Activated CD4-positive, alpha-beta T cell treated with anti-CD3 and anti-CD28 coated beads for 36 hours (primary cell): ENCODE measurements at regions of chr5 and their contacts with region 1.

Region 1: GRCh38 chr5:150700594-150701293 is at the start of gene RBM22:
- DNase-seq: peak; percentile 95
- ATAC-seq: peak; percentile 95
- H3K4me3 Mint-ChIP-seq: no peak within 1 kb of the TSS
- H3K27ac Mint-ChIP-seq: no peak within 1 kb of the TSS
- H3K4me1 Mint-ChIP-seq: peaks cover 15% of the 10 kb centered on the region
- H3K27me3 Mint-ChIP-seq: no peaks in the 10 kb centered on the region
- total RNA-seq, gene RBM22: 59.9 to 61.8 TPM

Region 2: GRCh38 chr5:150357326-150358260 is 343.2 kb before region 1 on chr5 and contains the start of gene TCOF1:
- CTCF ChIA-PET with region 1: no interaction called
- POLR2A ChIA-PET with region 1: no interaction called
- intact Hi-C with region 1: loop called in 1 of 2 experiments (anchors 1 kb)
- DNase-seq: peak; percentile 99
- ATAC-seq: peak; percentile 99
- H3K4me3 Mint-ChIP-seq: peak within 1 kb of the TSS; percentile 87
- H3K27ac Mint-ChIP-seq: peak within 1 kb of the TSS; percentile 90
- H3K4me1 Mint-ChIP-seq: peaks cover 43% of the 10 kb centered on the region
- H3K27me3 Mint-ChIP-seq: no peaks in the 10 kb centered on the region
- total RNA-seq, gene TCOF1: 113 to 145 TPM

Region 3: DNA sequence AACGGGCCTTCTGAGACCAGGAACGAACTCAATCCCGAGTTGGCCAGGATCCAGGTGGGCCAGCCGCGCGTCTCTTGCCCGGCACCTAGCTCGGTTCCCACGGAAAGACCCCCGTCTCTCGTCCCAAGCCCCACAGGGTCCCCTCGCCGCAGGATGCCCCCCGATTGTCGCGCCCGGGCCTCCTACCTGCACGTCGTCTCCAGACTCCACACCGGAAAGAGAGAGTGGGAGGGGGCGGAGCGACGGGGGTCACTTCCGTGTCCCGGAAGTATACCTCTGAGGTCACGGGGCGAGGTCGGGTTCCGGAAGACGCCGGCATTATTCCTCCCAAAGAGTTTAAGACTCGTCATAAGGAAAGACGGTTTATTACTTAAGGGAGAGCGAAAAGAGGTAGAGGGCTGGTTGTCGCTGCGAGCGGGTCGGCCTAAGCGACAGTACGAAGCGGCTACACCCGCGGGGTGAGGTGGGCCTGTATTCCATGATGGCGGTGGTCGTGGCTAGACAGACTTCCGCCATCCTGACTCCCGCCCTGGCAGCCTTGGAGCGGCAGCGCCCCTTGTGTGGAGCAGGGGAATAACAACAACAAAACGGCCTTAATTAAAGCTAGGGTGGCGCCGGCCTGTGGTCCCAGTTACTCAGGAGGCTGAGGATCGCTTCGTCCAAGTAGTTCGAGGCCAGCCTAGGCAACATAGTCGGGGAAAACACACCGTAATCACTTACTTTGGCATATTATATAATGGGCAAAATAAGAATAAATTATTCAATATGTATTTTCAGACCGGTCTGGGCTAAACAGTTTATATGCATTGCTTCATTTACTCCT is 251.0 kb before region 1 on chr5 and contains the start of gene RPS14:
- CTCF ChIA-PET with region 1: no interaction called
- POLR2A ChIA-PET with region 1: interaction called, 5 read pairs
- intact Hi-C with region 1: loop called (anchors 1 kb)
- DNase-seq: peak; percentile 96
- ATAC-seq: peak; percentile 93
- H3K4me3 Mint-ChIP-seq: peak within 1 kb of the TSS; percentile 95
- H3K27ac Mint-ChIP-seq: peak within 1 kb of the TSS; percentile 99
- H3K4me1 Mint-ChIP-seq: peaks cover 31% of the 10 kb centered on the region
- H3K27me3 Mint-ChIP-seq: no peaks in the 10 kb centered on the region
- total RNA-seq, gene RPS14: 2,270 to 3,312 TPM

Region 4: DNA sequence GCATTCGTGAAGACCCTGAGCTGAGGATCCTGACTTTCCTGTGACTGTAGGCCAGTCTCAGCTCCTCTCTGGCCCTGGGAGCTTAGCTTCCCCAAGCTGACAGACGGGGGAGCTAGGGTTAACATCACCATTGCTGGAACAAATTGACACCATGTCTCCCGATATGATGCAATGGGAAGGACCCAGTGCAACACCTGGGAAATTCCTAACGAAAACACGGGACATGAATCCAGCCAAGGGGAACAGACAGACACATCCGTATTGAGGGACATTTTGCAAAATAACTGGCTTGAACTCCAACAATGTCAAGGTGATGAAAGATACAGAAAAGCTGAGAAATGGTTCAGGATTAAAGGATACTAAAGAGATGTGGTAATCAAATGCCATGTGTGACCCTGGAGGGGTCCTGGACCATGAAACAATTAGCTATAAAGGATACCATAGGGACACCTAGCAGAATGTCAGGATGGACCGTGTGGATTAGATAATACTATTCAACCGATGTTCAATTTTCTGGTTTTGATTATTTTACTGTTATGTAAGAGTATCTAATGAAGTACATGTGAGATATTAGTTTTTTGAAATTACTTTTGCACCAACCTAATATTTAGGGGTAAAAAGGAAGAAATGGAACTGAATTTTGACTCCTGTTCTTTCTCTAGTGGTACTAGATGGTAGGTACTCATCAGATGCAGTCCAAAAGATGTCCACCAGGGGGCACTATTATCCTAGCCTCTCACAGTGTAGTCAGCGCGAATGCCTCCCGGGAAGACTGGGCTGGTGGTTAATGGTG is 140.1 kb before region 1 on chr5:
- CTCF ChIA-PET with region 1: interaction called, 4 read pairs
- POLR2A ChIA-PET with region 1: no interaction called
- intact Hi-C with region 1: loop called in 1 of 2 experiments (anchors 5 kb)
- DNase-seq: peak; percentile 92
- ATAC-seq: peak; percentile 97
- H3K4me3 Mint-ChIP-seq: no peak overlapping the region
- H3K27ac Mint-ChIP-seq: no peak overlapping the region
- H3K4me1 Mint-ChIP-seq: no peaks in the 10 kb centered on the region
- H3K27me3 Mint-ChIP-seq: no peaks in the 10 kb centered on the region

Region 5: GRCh38 chr5:150778517-150779396 is 78.0 kb after region 1 on chr5 and contains the start of gene SMIM3:
- CTCF ChIA-PET with region 1: interaction called, 26 read pairs
- POLR2A ChIA-PET with region 1: interaction called, 11 read pairs
- intact Hi-C with region 1: loop called (anchors 1 to 2 kb)
- DNase-seq: peak; percentile 87
- ATAC-seq: peak; percentile 60
- H3K4me3 Mint-ChIP-seq: peak within 1 kb of the TSS; percentile 99
- H3K27ac Mint-ChIP-seq: peak within 1 kb of the TSS; percentile 96
- H3K4me1 Mint-ChIP-seq: peaks cover 49% of the 10 kb centered on the region
- H3K27me3 Mint-ChIP-seq: peaks cover 3% of the 10 kb centered on the region
- total RNA-seq, gene SMIM3: 16.8 to 16.9 TPM

Region 6: DNA sequence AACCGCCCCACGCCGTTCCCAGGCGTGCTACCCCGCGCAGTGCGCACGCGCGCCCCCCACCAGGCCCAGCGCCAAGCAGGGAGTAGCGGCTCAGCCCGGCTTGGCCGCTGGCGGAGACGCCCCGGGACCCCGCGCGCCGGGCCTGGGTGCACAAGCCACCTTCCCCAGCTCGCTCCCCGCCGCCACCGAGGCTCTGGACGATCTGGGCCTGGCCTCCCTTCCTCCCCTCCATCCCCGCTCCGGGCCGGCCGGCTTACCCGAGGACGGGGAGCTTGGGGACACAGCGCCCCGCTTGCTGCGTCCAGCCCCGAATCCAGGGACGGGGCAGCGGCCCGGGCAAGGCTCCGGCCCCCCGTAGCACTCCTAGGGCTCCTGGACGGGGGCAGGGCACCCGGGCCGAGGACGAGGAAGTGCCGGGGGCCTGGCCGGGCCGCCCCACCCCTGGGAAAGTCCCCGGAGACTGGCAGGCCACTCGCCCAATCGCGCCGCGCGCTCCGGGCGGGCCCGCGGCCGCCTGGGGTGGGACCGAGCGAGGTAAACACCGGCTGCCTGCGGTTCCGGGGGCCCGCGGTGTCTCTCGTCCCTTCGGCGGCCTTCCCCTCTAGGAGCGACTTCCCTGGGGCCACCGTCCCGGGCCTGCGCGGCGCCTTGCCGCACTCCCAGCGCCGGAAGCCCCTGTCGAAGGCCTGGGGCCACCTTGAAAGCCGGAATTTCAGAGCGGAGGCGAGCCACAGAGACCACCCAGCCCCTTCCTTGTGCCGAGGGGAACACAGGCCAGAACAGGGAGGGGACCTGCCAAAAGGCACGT is 380.1 kb after region 1 on chr5 and contains the start of gene TNIP1:
- CTCF ChIA-PET with region 1: no interaction called
- POLR2A ChIA-PET with region 1: no interaction called
- intact Hi-C with region 1: loop called in 1 of 2 experiments (anchors 2 kb)
- DNase-seq: peak; percentile 96
- ATAC-seq: peak; percentile 67
- H3K4me3 Mint-ChIP-seq: peak within 1 kb of the TSS; percentile 80
- H3K27ac Mint-ChIP-seq: peak within 1 kb of the TSS; percentile 91
- H3K4me1 Mint-ChIP-seq: peaks cover 74% of the 10 kb centered on the region
- H3K27me3 Mint-ChIP-seq: no peaks in the 10 kb centered on the region
- total RNA-seq, gene TNIP1: 351 to 408 TPM

Region 7: DNA sequence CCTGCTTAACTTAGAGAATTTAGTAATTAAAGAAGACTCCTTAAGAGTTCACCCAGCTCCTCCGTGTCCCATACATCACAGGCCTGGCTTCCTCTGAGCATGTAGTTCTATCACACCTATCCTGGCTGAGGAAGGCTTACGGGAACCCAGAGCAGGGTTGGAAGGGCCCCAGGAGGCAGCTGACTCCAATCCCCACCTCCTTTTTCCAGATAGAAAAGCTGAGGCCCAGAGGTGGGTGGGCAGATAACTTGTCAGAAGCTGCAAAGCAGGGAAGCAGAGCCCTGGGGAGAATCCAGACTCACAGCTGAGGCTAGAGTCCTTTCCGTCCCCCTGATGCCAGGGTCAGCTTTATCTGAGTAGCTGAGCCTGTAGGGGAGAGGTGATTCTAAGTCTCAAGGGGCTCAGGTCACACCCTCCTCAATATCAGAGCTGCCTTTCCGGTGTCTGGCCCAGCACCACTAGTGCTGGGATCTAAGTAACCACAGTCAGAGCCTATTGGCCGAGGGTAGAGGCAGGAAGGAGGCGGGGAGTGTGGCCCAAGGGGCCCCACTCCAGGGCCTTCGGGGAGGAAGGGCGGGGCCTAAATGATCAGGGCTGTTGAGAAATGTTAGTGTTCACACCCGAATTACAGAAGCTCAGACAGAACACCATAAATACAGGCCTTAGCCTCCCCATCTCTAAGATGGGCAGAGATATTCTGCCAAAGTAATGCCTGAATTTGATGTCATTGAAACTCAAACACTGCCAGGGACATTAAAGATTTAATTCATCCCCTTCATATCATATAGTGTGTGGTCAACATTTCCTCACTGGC is 513.3 kb after region 1 on chr5:
- CTCF ChIA-PET with region 1: no interaction called
- POLR2A ChIA-PET with region 1: no interaction called
- intact Hi-C with region 1: loop called in 1 of 2 experiments (anchors 5 kb)
- DNase-seq: peak; percentile 92
- ATAC-seq: peak; percentile 89
- H3K4me3 Mint-ChIP-seq: peak overlapping the region; percentile 74
- H3K27ac Mint-ChIP-seq: peak overlapping the region; percentile 97
- H3K4me1 Mint-ChIP-seq: peaks cover 83% of the 10 kb centered on the region
- H3K27me3 Mint-ChIP-seq: no peaks in the 10 kb centered on the region